ENCODE measurements at regions of chr1 and their contacts with region 1.

Region 1: DNA sequence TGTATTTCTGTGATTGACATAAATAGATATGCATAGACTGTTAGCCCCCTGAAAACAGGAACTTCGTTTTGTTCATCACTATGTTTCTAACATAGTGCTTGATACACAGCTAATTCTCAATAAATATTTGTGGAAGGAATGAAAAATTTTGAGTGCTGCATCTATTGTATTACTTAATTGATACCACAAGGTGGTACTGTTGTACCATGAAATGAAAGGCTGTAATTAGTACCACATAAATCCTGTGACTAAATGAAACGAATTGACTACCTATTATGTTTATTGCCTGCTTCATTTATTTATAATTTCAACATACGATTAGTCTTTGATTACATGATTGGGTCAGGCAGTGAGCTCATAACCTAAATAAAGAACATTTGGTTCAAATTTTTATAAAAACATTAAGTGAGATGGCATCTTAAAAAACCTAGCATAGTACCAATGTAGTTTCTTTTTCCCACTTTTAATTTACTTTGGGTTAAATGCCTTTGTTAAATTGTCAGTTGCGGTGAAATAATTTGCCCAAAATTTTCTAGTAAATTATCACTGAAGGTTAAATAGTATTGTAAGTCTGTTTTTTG is 15.0 kb upstream of the TGFB2 start:
- DNase-seq: peak in 1 of 2 donors; percentile 73
- H3K4me3 ChIP-seq: no peak overlapping the region
- H3K27ac ChIP-seq: no peak overlapping the region
- H3K4me1 ChIP-seq: no peaks in the 10 kb centered on the region
- H3K27me3 ChIP-seq: no peaks in the 10 kb centered on the region
- CTCF ChIP-seq: peak in 3 of 7 experiments; percentile 59 to 70 (median 67)
- EP300 ChIP-seq: no peak
- POLR2A ChIP-seq: no peak

Region 2: GRCh38 chr1:218273762-218274479 is 56.2 kb before region 1 on chr1:
- intact Hi-C with region 1: no loop called
- DNase-seq: no peak
- H3K4me3 ChIP-seq: no peak overlapping the region
- H3K27ac ChIP-seq: no peak overlapping the region
- H3K4me1 ChIP-seq: no peaks in the 10 kb centered on the region
- H3K27me3 ChIP-seq: no peaks in the 10 kb centered on the region
- CTCF ChIP-seq: no peak
- EP300 ChIP-seq: no peak
- POLR2A ChIP-seq: no peak

Region 3: GRCh38 chr1:218377143-218377660 is 47.1 kb after region 1 on chr1:
- intact Hi-C with region 1: no loop called
- DNase-seq: no peak
- H3K4me3 ChIP-seq: no peak overlapping the region
- H3K27ac ChIP-seq: no peak overlapping the region
- H3K4me1 ChIP-seq: peaks cover 6 to 59% (median 32%) of the 10 kb centered on the region in 4 donors
- H3K27me3 ChIP-seq: no peaks in the 10 kb centered on the region
- CTCF ChIP-seq: no peak
- EP300 ChIP-seq: no peak
- POLR2A ChIP-seq: no peak

Region 4: GRCh38 chr1:218521375-218522169 is 191.4 kb after region 1 on chr1:
- intact Hi-C with region 1: loop called (anchors 10 kb)
- DNase-seq: peak; percentile 32 to 63
- H3K4me3 ChIP-seq: no peak overlapping the region
- H3K27ac ChIP-seq: no peak overlapping the region
- H3K4me1 ChIP-seq: no peaks in the 10 kb centered on the region
- H3K27me3 ChIP-seq: no peaks in the 10 kb centered on the region
- CTCF ChIP-seq: peak in 5 of 7 experiments; percentile 30 to 63 (median 51)
- EP300 ChIP-seq: no peak
- POLR2A ChIP-seq: no peak